ENCODE measurements at regions of chr6 and their contacts with region 1.

Region 1: GRCh38 chr6:7624796-7625710 is 35.1 kb downstream of the SNRNP48 start:
- DNase-seq: no peak
- H3K4me3 ChIP-seq: no peak overlapping the region
- H3K27ac ChIP-seq: no peak overlapping the region
- H3K4me1 ChIP-seq: no peaks in the 10 kb centered on the region
- H3K27me3 ChIP-seq: no peaks in the 10 kb centered on the region
- CTCF ChIP-seq: no peak
- POLR2A ChIP-seq: no peak

Region 2: GRCh38 chr6:7658544-7658943 is 33.5 kb after region 1 on chr6:
- intact Hi-C with region 1: no loop called
- DNase-seq: no peak
- H3K4me3 ChIP-seq: no peak overlapping the region
- H3K27ac ChIP-seq: no peak overlapping the region
- H3K4me1 ChIP-seq: no peaks in the 10 kb centered on the region
- H3K27me3 ChIP-seq: peaks cover 0 to 2% of the 10 kb centered on the region in 2 donors
- CTCF ChIP-seq: no peak
- POLR2A ChIP-seq: no peak

Region 3: GRCh38 chr6:7680393-7681075 is 55.5 kb after region 1 on chr6:
- intact Hi-C with region 1: loop called (anchors 2 kb)
- DNase-seq: no peak
- H3K4me3 ChIP-seq: no peak overlapping the region
- H3K27ac ChIP-seq: no peak overlapping the region
- H3K4me1 ChIP-seq: no peaks in the 10 kb centered on the region
- H3K27me3 ChIP-seq: peaks cover 0 to 5% of the 10 kb centered on the region in 2 donors
- CTCF ChIP-seq: no peak
- POLR2A ChIP-seq: no peak

Region 4: DNA sequence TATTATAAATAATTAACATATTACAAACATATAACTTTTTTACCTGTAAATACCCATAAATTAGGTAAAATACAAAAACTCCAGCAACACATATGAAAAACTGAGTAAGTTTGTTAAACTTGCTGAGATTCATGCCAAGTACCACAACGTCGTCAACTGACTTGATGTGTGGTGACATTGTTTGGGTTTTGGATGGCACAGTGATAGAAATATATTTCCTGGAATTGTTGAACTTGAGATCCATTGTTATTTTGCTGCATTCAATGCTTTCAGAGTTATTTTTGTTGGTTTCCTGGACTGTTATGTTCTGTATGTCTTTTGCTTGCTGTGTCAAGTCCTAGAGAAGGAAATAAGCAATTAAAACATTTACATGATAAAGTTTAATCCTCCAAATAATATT is 804.8 kb after region 1 on chr6:
- intact Hi-C with region 1: loop called (anchors 5 kb)
- DNase-seq: no peak
- H3K4me3 ChIP-seq: no peak overlapping the region
- H3K27ac ChIP-seq: no peak overlapping the region
- H3K4me1 ChIP-seq: peaks cover 0 to 5% of the 10 kb centered on the region in 2 donors
- H3K27me3 ChIP-seq: no peaks in the 10 kb centered on the region
- CTCF ChIP-seq: no peak
- POLR2A ChIP-seq: no peak